ENCODE measurements at regions of chr19 and their contacts with region 1.

Region 1: DNA sequence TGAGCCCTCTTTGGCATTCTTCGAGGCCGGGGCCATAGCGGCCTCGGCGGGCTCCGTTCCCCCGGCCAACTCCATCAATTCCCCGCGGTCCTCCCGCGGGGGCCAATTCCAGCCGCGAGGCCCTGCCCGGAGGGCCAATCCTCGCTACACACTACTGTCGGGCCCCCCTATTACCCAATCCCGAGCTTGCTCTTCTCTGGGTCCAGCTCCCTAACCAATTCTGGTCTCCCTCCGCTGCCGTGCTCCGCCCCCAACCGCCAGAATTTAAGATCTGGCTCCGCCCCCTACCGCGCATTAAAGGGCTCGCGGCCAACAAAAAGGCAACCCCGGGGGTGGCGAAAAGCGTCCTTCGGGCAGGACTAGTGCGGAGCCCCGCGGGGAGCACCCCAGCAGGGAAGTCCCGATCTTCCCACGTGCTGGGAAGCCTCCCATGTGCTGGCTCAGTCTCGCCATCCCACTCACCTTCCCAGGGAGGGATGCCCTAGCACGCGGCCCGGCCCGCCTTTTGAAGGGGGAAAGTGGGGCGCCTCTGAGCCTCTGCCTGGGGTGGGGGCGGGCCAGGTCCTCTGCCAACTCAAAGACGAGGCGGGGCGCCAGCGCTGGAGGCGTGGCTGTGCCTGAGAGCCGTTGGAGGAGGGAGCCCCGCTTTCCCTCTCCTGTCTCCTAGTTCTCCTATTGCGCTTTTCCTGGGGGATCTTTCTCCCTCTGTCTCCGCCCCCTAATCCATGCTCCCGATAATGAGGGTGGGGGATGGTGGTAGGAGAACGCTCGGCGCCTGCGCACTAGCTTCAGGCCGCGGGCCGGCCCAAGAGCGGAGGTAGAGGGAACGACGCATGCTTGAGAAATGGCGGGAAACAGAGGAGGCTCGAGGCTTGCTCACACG is 3.5 kb downstream of the LIPE start:
- DNase-seq: peak; percentile 87 to 95 (median 93)
- ATAC-seq: peak; percentile 86
- H3K4me3 ChIP-seq: peak overlapping the region; percentile 78 to 87
- H3K4me3 Mint-ChIP-seq: peak overlapping the region; percentile 93
- H3K27ac ChIP-seq: peak overlapping the region; percentile 49 to 74
- H3K27ac Mint-ChIP-seq: peak overlapping the region; percentile 87
- H3K4me1 ChIP-seq: peaks cover 31% of the 10 kb centered on the region
- H3K4me1 Mint-ChIP-seq: peaks cover 41% of the 10 kb centered on the region
- H3K27me3 ChIP-seq: no peaks in the 10 kb centered on the region
- H3K27me3 Mint-ChIP-seq: no peaks in the 10 kb centered on the region
- CTCF ChIP-seq: no peak

Region 2: GRCh38 chr19:42010245-42011126 is 413.2 kb before region 1 on chr19:
- CTCF ChIA-PET with region 1: no interaction called
- POLR2A ChIA-PET with region 1: no interaction called
- intact Hi-C with region 1: no loop called
- DNase-seq: no peak
- ATAC-seq: no peak
- H3K4me3 ChIP-seq: no peak overlapping the region
- H3K4me3 Mint-ChIP-seq: no peak overlapping the region
- H3K27ac ChIP-seq: no peak overlapping the region
- H3K27ac Mint-ChIP-seq: no peak overlapping the region
- H3K4me1 ChIP-seq: no peaks in the 10 kb centered on the region
- H3K4me1 Mint-ChIP-seq: no peaks in the 10 kb centered on the region
- H3K27me3 ChIP-seq: no peaks in the 10 kb centered on the region
- H3K27me3 Mint-ChIP-seq: peaks cover 4% of the 10 kb centered on the region
- CTCF ChIP-seq: no peak

Region 3: GRCh38 chr19:42219812-42220750 is 203.6 kb before region 1 on chr19 and contains the start of gene ZNF526:
- CTCF ChIA-PET with region 1: no interaction called
- POLR2A ChIA-PET with region 1: no interaction called
- intact Hi-C with region 1: loop called in 1 of 2 experiments (anchors 10 kb)
- DNase-seq: peak; percentile 94 to 99 (median 96)
- ATAC-seq: peak; percentile 79
- H3K4me3 ChIP-seq: peak within 1 kb of the TSS; percentile 85 to 90
- H3K4me3 Mint-ChIP-seq: peak within 1 kb of the TSS; percentile 96
- H3K27ac ChIP-seq: peak within 1 kb of the TSS; percentile 72 to 73
- H3K27ac Mint-ChIP-seq: peak within 1 kb of the TSS; percentile 95
- H3K4me1 ChIP-seq: peaks cover 42% of the 10 kb centered on the region
- H3K4me1 Mint-ChIP-seq: peaks cover 52% of the 10 kb centered on the region
- H3K27me3 ChIP-seq: no peaks in the 10 kb centered on the region
- H3K27me3 Mint-ChIP-seq: no peaks in the 10 kb centered on the region
- CTCF ChIP-seq: no peak
- total RNA-seq, gene ZNF526: 8.7 to 9.4 TPM

Region 4: DNA sequence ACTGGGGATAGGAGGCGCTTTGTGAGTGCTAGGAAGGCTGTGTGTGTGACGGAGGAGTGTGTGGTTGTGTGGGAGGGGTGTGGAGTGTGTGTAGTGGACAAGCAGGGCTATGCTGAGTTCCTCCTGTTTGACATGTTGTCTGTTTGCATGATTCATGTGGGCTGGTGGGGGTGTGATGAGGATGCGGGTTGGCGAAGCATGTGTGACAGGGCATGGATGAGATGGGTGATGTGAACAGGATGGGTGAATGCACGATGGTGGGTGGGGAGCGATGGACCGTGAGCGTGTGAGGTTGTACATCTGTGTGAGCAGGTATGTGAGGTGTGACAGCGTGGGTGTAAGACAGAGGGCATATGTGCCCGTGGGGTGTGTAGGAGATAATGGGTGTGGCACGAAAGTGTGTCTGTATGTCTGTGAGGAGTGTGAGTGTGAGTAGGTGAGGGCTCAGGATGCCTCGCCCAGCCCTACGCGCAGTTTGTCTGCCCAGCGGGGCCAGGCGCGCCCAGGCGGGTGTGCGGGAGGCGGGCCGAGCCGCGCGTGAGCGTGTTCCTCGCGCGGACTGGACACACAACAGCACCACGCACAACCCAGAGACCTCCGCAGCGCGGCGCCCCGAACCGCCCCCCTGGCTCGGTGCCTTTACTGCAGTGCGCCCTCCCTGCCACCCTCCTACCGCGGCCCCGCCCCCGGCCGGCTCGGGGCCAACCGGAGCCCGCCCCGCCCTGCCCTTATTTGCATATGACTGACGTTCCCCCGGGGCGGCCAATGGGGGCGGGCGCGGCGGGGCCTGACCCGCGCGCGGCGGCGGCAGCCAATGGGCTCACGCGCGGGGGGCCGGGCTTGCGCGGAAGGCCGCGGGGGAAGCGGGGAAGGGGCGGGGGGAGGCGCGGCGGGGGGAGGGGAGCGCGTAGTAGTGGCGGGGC is 140.3 kb before region 1 on chr19:
- CTCF ChIA-PET with region 1: no interaction called
- POLR2A ChIA-PET with region 1: no interaction called
- intact Hi-C with region 1: loop called in 1 of 2 experiments (anchors 5 kb)
- DNase-seq: peak; percentile 90 to 98 (median 97)
- ATAC-seq: peak; percentile 69
- H3K4me3 ChIP-seq: peak overlapping the region; percentile 40 to 59
- H3K4me3 Mint-ChIP-seq: no peak overlapping the region
- H3K27ac ChIP-seq: peak overlapping the region; percentile 85 to 94
- H3K27ac Mint-ChIP-seq: no peak overlapping the region
- H3K4me1 ChIP-seq: peaks cover 47% of the 10 kb centered on the region
- H3K4me1 Mint-ChIP-seq: peaks cover 48% of the 10 kb centered on the region
- H3K27me3 ChIP-seq: no peaks in the 10 kb centered on the region
- H3K27me3 Mint-ChIP-seq: no peaks in the 10 kb centered on the region
- CTCF ChIP-seq: no peak

Region 5: GRCh38 chr19:42309686-42310085 is 114.0 kb before region 1 on chr19:
- CTCF ChIA-PET with region 1: no interaction called
- POLR2A ChIA-PET with region 1: no interaction called
- intact Hi-C with region 1: no loop called
- DNase-seq: no peak
- ATAC-seq: no peak
- H3K4me3 ChIP-seq: no peak overlapping the region
- H3K4me3 Mint-ChIP-seq: no peak overlapping the region
- H3K27ac ChIP-seq: no peak overlapping the region
- H3K27ac Mint-ChIP-seq: no peak overlapping the region
- H3K4me1 ChIP-seq: peaks cover 12% of the 10 kb centered on the region
- H3K4me1 Mint-ChIP-seq: peaks cover 12% of the 10 kb centered on the region
- H3K27me3 ChIP-seq: peaks cover 18 to 21% of the 10 kb centered on the region in 2 experiments
- H3K27me3 Mint-ChIP-seq: peaks cover 28% of the 10 kb centered on the region
- CTCF ChIP-seq: no peak

Region 6: DNA sequence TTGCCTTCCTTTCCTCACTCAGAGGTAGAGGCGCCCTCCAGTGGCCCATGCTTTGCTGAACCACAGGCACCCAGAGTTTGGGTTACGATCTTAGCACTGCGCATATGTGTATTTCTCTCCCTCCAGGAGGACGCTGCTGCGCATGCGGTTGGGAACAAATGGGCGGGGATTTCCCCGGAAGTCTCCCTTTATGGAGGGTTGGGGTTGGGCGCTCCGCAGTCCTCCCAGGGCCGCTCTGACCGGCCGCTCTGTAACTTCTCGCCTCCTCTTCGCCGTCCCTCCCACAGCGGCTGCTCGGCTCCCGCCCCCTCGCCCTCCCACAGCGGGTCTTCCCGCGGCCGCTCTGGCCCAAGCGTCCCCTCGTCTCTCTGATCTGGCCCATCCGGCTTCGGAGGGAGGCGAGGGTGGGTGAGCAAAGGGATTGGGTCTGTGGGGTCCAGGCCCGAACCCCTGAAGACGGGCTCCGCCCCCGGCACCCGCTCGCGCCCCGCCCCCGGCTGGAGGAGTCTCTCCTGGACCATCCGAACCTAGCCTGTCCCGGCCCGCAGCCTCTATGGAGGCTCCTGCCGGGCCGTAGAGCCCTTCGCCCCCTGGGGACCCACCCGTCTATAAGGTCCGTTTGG is 98.3 kb before region 1 on chr19 and contains the start of gene MEGF8:
- CTCF ChIA-PET with region 1: no interaction called
- POLR2A ChIA-PET with region 1: no interaction called
- intact Hi-C with region 1: loop called (anchors 1 to 5 kb)
- DNase-seq: peak; percentile 96 to 99 (median 98)
- ATAC-seq: peak; percentile 93
- H3K4me3 ChIP-seq: peak within 1 kb of the TSS; percentile 85 to 98
- H3K4me3 Mint-ChIP-seq: peak within 1 kb of the TSS; percentile 97
- H3K27ac ChIP-seq: peak within 1 kb of the TSS; percentile 36 to 56
- H3K27ac Mint-ChIP-seq: peak within 1 kb of the TSS; percentile 88
- H3K4me1 ChIP-seq: peaks cover 12% of the 10 kb centered on the region
- H3K4me1 Mint-ChIP-seq: peaks cover 24% of the 10 kb centered on the region
- H3K27me3 ChIP-seq: peaks cover 4 to 7% of the 10 kb centered on the region in 2 experiments
- H3K27me3 Mint-ChIP-seq: peaks cover 12% of the 10 kb centered on the region
- CTCF ChIP-seq: peak; percentile 66
- total RNA-seq, gene MEGF8: 5.2 to 5.9 TPM

Region 7: GRCh38 chr19:42396381-42397262 is 27.1 kb before region 1 on chr19:
- CTCF ChIA-PET with region 1: interaction called, 6 read pairs
- POLR2A ChIA-PET with region 1: interaction called, 6 read pairs
- intact Hi-C with region 1: loop called (anchors 1 to 2 kb)
- DNase-seq: peak; percentile 83 to 95 (median 90)
- ATAC-seq: peak; percentile 86
- H3K4me3 ChIP-seq: peak overlapping the region; percentile 55 to 75
- H3K4me3 Mint-ChIP-seq: peak overlapping the region; percentile 82
- H3K27ac ChIP-seq: peak overlapping the region; percentile 46 to 83
- H3K27ac Mint-ChIP-seq: peak overlapping the region; percentile 50
- H3K4me1 ChIP-seq: peaks cover 21% of the 10 kb centered on the region
- H3K4me1 Mint-ChIP-seq: peaks cover 40% of the 10 kb centered on the region
- H3K27me3 ChIP-seq: no peaks in the 10 kb centered on the region
- H3K27me3 Mint-ChIP-seq: no peaks in the 10 kb centered on the region
- CTCF ChIP-seq: no peak

Region 8: DNA sequence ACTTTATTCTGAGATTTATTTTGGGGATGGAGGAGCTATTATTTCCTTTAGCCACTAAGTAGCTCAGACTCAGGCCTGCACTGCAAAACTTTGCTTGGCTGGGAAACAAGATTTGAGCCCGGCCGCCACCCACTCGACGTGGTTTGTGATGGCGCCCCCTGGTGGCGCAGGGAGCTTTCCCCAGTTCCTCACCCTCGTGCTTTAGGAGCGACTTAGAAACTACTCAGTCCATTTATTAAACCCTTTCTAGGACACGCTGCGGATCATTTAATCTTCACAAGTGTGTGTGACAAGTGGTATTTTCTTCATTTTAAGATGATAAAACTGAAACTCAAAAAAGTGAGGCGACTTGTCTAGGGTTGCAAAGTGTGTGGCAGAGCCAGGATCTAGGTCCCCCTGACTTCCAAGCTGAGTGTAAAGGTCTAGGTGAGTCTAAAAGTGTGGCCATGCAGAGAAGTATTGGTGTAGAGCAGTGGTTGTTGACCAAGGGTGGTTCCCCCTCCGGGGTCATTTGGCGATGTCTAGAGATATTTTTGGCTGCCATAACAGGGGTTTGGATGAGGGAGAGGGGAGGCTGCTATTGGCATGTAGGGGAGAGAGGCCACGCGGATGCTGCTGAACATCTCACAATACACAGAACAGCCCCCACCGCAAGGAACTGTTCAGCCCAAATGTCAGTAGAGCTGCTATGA is 16.8 kb after region 1 on chr19:
- CTCF ChIA-PET with region 1: interaction called, 28 read pairs
- POLR2A ChIA-PET with region 1: interaction called, 8 read pairs
- intact Hi-C with region 1: loop called (anchors 1 to 2 kb)
- DNase-seq: peak; percentile 69 to 88 (median 80)
- ATAC-seq: peak; percentile 43
- H3K4me3 ChIP-seq: no peak overlapping the region
- H3K4me3 Mint-ChIP-seq: no peak overlapping the region
- H3K27ac ChIP-seq: no peak overlapping the region
- H3K27ac Mint-ChIP-seq: peak overlapping the region; percentile 4
- H3K4me1 ChIP-seq: peaks cover 15% of the 10 kb centered on the region
- H3K4me1 Mint-ChIP-seq: peaks cover 20% of the 10 kb centered on the region
- H3K27me3 ChIP-seq: no peaks in the 10 kb centered on the region
- H3K27me3 Mint-ChIP-seq: no peaks in the 10 kb centered on the region
- CTCF ChIP-seq: peak; percentile 96

Region 9: GRCh38 chr19:42553292-42554045 is 129.8 kb after region 1 on chr19:
- CTCF ChIA-PET with region 1: no interaction called
- POLR2A ChIA-PET with region 1: no interaction called
- intact Hi-C with region 1: no loop called
- DNase-seq: peak in 1 of 9 experiments; percentile 21
- ATAC-seq: no peak
- H3K4me3 ChIP-seq: no peak overlapping the region
- H3K4me3 Mint-ChIP-seq: no peak overlapping the region
- H3K27ac ChIP-seq: no peak overlapping the region
- H3K27ac Mint-ChIP-seq: no peak overlapping the region
- H3K4me1 ChIP-seq: no peaks in the 10 kb centered on the region
- H3K4me1 Mint-ChIP-seq: no peaks in the 10 kb centered on the region
- H3K27me3 ChIP-seq: no peaks in the 10 kb centered on the region
- H3K27me3 Mint-ChIP-seq: peaks cover 16% of the 10 kb centered on the region
- CTCF ChIP-seq: no peak

Measured in CD8-positive, alpha-beta T cell (primary cell).